ENCODE measurements at regions of chr7 and their contacts with region 1.

Region 1: GRCh38 chr7:26193432-26194207 is 6.9 kb downstream of the HNRNPA2B1 start:
- DNase-seq: no peak
- H3K4me3 ChIP-seq: no peak overlapping the region
- H3K4me3 Mint-ChIP-seq: peak overlapping the region; percentile 38 to 100 (median 79)
- H3K27ac ChIP-seq: peak overlapping the region; percentile 36
- H3K27ac Mint-ChIP-seq: peak overlapping the region; percentile 38 to 99 (median 89)
- H3K4me1 ChIP-seq: peaks cover 90% of the 10 kb centered on the region
- H3K4me1 Mint-ChIP-seq: peaks cover 64 to 93% (median 75%) of the 10 kb centered on the region in 4 donors
- H3K27me3 ChIP-seq: no peaks in the 10 kb centered on the region
- H3K27me3 Mint-ChIP-seq: no peaks in the 10 kb centered on the region

Region 2: DNA sequence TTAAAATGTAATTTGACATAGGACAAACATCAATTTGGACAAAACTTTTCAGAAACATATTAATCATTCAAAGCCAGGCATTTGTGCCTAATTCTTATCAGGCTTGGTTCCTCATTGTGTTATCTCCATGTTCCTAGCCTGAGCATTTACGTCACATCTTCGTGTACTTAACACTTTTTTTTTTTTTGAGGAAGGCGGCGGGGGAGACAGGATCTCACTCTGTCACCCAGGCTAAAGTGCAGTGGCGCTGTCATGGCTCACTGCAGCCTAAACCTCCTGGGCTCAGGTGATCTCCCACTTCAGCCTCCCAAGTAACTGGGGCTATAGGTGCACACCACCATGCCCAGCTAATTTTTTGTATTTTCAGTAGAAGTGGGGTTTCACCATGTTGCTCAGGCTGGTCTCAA is 12.8 kb before region 1 on chr7:
- CTCF ChIA-PET with region 1: interaction called, 12 read pairs
- POLR2A ChIA-PET with region 1: interaction called, 369 read pairs
- intact Hi-C with region 1: loop called (anchors 2 kb)
- DNase-seq: no peak
- H3K4me3 ChIP-seq: no peak overlapping the region
- H3K4me3 Mint-ChIP-seq: no peak overlapping the region
- H3K27ac ChIP-seq: no peak overlapping the region
- H3K27ac Mint-ChIP-seq: peak overlapping the region in 4 of 7 donors; percentile 1 to 81 (median 20)
- H3K4me1 ChIP-seq: peaks cover 34% of the 10 kb centered on the region
- H3K4me1 Mint-ChIP-seq: peaks cover 31 to 68% (median 44%) of the 10 kb centered on the region in 4 donors
- H3K27me3 ChIP-seq: no peaks in the 10 kb centered on the region
- H3K27me3 Mint-ChIP-seq: no peaks in the 10 kb centered on the region

Region 3: GRCh38 chr7:26429168-26429567 is 235.5 kb after region 1 on chr7:
- CTCF ChIA-PET with region 1: no interaction called
- POLR2A ChIA-PET with region 1: no interaction called
- intact Hi-C with region 1: no loop called
- DNase-seq: no peak
- H3K4me3 ChIP-seq: no peak overlapping the region
- H3K4me3 Mint-ChIP-seq: no peak overlapping the region
- H3K27ac ChIP-seq: no peak overlapping the region
- H3K27ac Mint-ChIP-seq: no peak overlapping the region
- H3K4me1 ChIP-seq: no peaks in the 10 kb centered on the region
- H3K4me1 Mint-ChIP-seq: no peaks in the 10 kb centered on the region
- H3K27me3 ChIP-seq: no peaks in the 10 kb centered on the region
- H3K27me3 Mint-ChIP-seq: peaks cover 8 to 9% of the 10 kb centered on the region in 2 donors

Measured in CD4-positive, alpha-beta memory T cell (primary cell).